A673 (cell line): ENCODE measurements at regions of chr16 and their contacts with region 1.

Region 1: GRCh38 chr16:77938914-77939313 is 83.4 kb upstream of the CLEC3A start:
- DNase-seq: peak; percentile 11
- H3K4me3 ChIP-seq: no peak overlapping the region
- H3K27ac ChIP-seq: no peak overlapping the region
- H3K4me1 ChIP-seq: no peaks in the 10 kb centered on the region
- H3K27me3 ChIP-seq: no peaks in the 10 kb centered on the region
- CTCF ChIP-seq: no peak

Region 2: DNA sequence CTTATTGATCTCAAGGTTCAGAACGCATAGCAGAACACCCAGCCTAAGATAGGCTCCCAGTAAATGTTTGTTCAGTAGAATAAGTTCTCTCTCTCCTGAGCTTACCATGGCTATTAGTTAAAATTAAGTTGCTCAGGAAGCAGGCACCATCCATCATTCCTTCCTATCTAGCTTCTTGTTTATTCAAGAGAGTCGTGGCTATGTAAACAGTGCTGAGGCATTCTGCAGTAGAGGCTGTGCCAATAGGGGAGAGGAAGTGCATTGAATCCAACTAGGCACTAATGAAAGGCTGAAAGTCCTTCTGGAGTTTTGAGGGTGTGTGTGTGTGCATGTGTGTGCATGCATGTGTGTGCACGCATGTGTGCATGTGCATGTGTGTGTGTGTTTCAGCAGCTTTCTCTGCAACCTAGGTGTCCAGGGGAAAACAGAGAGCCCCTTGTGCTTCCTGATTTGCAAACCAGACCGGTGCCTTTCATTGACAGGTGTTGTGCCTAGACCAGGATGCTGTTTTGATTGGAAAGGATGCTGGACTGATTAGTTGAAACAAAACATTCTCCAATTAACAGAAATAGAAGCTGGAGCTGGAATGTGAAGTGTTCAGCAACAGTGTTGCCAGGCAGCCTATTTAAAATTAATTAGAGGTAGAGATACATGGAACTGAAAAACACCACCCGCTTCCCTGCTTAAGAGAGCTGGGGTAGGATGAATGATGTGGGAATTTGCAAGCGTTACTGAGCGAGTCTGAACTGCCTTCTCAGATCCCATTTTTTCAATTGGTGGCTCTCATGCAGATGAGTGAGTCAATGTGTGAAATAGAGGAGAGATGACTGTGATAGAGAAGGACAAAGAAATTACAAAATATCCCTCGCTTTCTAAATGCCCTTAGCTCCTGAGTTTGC is 19.9 kb before region 1 on chr16:
- CTCF ChIA-PET with region 1: no interaction called
- POLR2A ChIA-PET with region 1: interaction called, 11 read pairs
- intact Hi-C with region 1: no loop called
- DNase-seq: no peak
- H3K4me3 ChIP-seq: no peak overlapping the region
- H3K27ac ChIP-seq: no peak overlapping the region
- H3K4me1 ChIP-seq: no peaks in the 10 kb centered on the region
- H3K27me3 ChIP-seq: no peaks in the 10 kb centered on the region
- CTCF ChIP-seq: no peak